A673 (cell line): ENCODE measurements at regions of chr1 and their contacts with region 1.

Region 1: GRCh38 chr1:26145041-26145959 is 13.6 kb upstream of the FAM110D start:
- DNase-seq: peak; percentile 87
- H3K4me3 ChIP-seq: no peak overlapping the region
- H3K27ac ChIP-seq: no peak overlapping the region
- H3K4me1 ChIP-seq: no peaks in the 10 kb centered on the region
- H3K27me3 ChIP-seq: no peaks in the 10 kb centered on the region
- CTCF ChIP-seq: peak; percentile 69

Region 2: DNA sequence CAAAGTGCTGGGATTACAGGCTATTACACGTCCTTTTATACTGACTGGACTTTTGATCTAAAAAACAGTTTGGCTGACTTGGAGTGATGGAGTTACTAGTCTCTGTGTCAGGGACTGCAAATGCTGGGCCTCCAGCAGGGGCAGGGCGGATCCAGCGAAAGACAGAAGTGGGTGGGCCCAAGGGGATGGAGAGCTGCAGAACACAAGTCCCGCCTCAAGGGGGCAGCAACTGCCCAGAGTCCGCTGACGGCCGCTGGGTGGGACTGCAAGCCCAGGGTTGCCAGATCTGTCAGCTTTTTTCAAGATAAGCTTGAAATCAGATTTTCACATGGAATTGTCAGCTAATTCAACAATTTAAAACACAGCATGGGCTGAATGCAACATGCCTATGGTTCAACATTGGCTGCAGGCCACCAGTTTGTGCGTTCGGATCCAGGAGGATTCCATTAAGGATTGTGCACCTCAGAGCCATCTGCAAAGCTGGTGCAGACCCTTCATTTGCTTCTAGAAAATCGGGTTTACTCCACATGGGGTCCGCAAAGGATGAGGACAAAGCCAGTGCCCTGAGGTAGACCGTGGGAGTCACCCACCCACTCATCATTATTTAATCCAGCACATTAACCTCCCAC is 249.8 kb before region 1 on chr1:
- CTCF ChIA-PET with region 1: interaction called, 8 read pairs
- POLR2A ChIA-PET with region 1: no interaction called
- intact Hi-C with region 1: loop called (anchors 5 kb)
- DNase-seq: peak; percentile 96
- H3K4me3 ChIP-seq: no peak overlapping the region
- H3K27ac ChIP-seq: peak overlapping the region; percentile 40
- H3K4me1 ChIP-seq: peaks cover 37% of the 10 kb centered on the region
- H3K27me3 ChIP-seq: no peaks in the 10 kb centered on the region
- CTCF ChIP-seq: peak; percentile 99

Region 3: GRCh38 chr1:26035959-26036755 is 109.1 kb before region 1 on chr1:
- CTCF ChIA-PET with region 1: interaction called, 7 read pairs
- POLR2A ChIA-PET with region 1: no interaction called
- intact Hi-C with region 1: loop called (anchors 5 kb)
- DNase-seq: peak; percentile 75
- H3K4me3 ChIP-seq: peak overlapping the region; percentile 66
- H3K27ac ChIP-seq: no peak overlapping the region
- H3K4me1 ChIP-seq: peaks cover 5% of the 10 kb centered on the region
- H3K27me3 ChIP-seq: no peaks in the 10 kb centered on the region
- CTCF ChIP-seq: peak; percentile 98

Region 4: DNA sequence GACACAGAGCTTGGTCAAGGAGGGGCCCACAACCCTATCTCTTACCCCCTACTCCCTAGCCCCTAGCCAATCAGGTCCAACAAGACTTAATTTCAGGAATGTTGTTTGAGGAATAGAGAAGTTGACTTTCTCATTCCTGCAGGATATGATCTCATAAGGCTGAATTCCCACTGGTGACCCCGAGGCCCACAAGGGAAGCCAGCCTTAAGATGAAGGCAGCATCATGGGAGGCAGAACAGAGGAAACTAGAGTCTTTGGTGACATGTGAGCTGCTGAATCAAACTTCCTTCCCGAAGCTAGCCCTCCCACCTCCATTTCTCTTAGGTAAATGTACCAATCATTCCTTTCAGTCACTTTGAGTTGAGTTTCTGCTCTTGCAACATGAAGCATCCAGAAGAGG is 42.8 kb before region 1 on chr1:
- CTCF ChIA-PET with region 1: interaction called, 30 read pairs
- POLR2A ChIA-PET with region 1: no interaction called
- intact Hi-C with region 1: loop called (anchors 1 kb)
- DNase-seq: no peak
- H3K4me3 ChIP-seq: no peak overlapping the region
- H3K27ac ChIP-seq: no peak overlapping the region
- H3K4me1 ChIP-seq: no peaks in the 10 kb centered on the region
- H3K27me3 ChIP-seq: no peaks in the 10 kb centered on the region
- CTCF ChIP-seq: no peak